Natural killer cell (primary cell): ENCODE measurements at regions of chr3 and their contacts with region 1.

Region 1: DNA sequence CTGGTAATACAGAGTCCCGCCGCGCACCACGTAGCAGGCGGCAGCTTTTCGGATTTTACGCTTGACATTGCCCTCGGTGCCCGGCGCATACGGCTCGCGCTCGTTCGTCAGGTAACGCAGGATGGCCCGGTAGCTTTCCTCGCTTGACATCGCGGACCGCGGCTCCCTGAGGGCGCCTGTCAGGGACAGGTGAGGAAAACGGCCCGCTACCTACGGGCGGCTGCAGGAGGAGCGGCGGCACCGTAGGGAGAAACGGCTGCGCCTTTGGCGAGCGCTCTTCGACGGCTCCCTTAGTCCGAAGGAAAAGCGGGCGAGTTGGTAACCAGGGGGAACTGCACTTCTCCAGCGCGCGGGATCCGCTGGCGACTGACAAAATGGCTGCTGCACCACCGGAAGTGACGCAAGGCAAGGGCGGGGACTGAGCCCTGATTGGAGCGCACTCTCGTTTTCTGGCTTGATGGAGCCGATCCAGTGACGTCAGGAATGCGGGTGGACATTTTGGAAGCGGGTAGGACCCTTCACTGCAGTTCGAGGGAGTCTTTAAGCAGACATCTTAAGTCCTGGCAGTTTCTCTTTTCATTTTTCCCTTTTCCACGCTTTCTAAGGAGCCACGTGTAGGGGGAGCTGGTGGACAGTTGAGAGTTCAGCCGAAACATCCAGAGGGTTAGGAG is at the start of gene ZBTB11:
- DNase-seq: peak; percentile 100
- ATAC-seq: peak; percentile 67 to 81 (median 71)
- H3K4me3 ChIP-seq: peak within 1 kb of the TSS; percentile 92
- H3K4me3 Mint-ChIP-seq: peak within 1 kb of the TSS; percentile 97
- H3K27ac ChIP-seq: peak within 1 kb of the TSS; percentile 98
- H3K27ac Mint-ChIP-seq: peak within 1 kb of the TSS; percentile 96 to 98
- H3K4me1 ChIP-seq: peaks cover 20% of the 10 kb centered on the region
- H3K4me1 Mint-ChIP-seq: peaks cover 45 to 52% of the 10 kb centered on the region in 2 donors
- H3K27me3 ChIP-seq: no peaks in the 10 kb centered on the region
- H3K27me3 Mint-ChIP-seq: no peaks in the 10 kb centered on the region
- CTCF ChIP-seq: no peak
- total RNA-seq, gene ZBTB11: 72.0 to 90.9 (median 83.5) TPM

Region 2: GRCh38 chr3:101050046-101050445 is 626.9 kb before region 1 on chr3:
- intact Hi-C with region 1: no loop called
- DNase-seq: no peak
- ATAC-seq: no peak
- H3K4me3 ChIP-seq: no peak overlapping the region
- H3K4me3 Mint-ChIP-seq: no peak overlapping the region
- H3K27ac ChIP-seq: no peak overlapping the region
- H3K27ac Mint-ChIP-seq: no peak overlapping the region
- H3K4me1 ChIP-seq: no peaks in the 10 kb centered on the region
- H3K4me1 Mint-ChIP-seq: no peaks in the 10 kb centered on the region
- H3K27me3 ChIP-seq: no peaks in the 10 kb centered on the region
- H3K27me3 Mint-ChIP-seq: peaks cover 0 to 2% of the 10 kb centered on the region in 2 donors
- CTCF ChIP-seq: no peak

Region 3: DNA sequence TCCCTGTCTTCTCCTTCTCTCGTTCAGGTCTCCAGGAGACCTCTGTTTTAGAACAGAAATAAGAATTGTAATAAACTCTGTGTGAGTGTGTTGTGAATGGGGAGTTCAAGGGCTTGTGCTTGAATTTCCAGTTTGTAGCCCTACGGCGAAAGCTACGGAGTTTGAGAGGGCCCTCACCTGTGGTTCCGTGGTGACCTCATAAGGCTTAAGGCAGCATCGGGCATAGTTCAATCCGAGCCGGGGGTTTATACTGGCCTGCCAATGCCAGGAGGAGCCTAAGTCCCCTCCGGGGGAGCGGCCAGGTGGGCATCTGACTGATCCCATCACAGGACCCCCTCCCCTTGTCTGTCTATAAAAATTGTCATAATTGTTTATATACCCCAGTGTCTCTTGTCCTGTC is 43.7 kb before region 1 on chr3:
- intact Hi-C with region 1: no loop called
- DNase-seq: no peak
- ATAC-seq: no peak
- H3K4me3 ChIP-seq: no peak overlapping the region
- H3K4me3 Mint-ChIP-seq: no peak overlapping the region
- H3K27ac ChIP-seq: no peak overlapping the region
- H3K27ac Mint-ChIP-seq: no peak overlapping the region
- H3K4me1 ChIP-seq: peaks cover 9% of the 10 kb centered on the region
- H3K4me1 Mint-ChIP-seq: no peaks in the 10 kb centered on the region
- H3K27me3 ChIP-seq: no peaks in the 10 kb centered on the region
- H3K27me3 Mint-ChIP-seq: no peaks in the 10 kb centered on the region
- CTCF ChIP-seq: no peak

Region 4: GRCh38 chr3:101643861-101644613 is 32.9 kb before region 1 on chr3:
- intact Hi-C with region 1: loop called (anchors 1 kb)
- DNase-seq: peak; percentile 35 to 68
- ATAC-seq: peak; percentile 88 to 91 (median 90)
- H3K4me3 ChIP-seq: no peak overlapping the region
- H3K4me3 Mint-ChIP-seq: peak overlapping the region; percentile 65
- H3K27ac ChIP-seq: peak overlapping the region; percentile 79
- H3K27ac Mint-ChIP-seq: peak overlapping the region; percentile 90 to 91
- H3K4me1 ChIP-seq: peaks cover 26% of the 10 kb centered on the region
- H3K4me1 Mint-ChIP-seq: peaks cover 20 to 24% of the 10 kb centered on the region in 2 donors
- H3K27me3 ChIP-seq: no peaks in the 10 kb centered on the region
- H3K27me3 Mint-ChIP-seq: no peaks in the 10 kb centered on the region
- CTCF ChIP-seq: no peak

Region 5: DNA sequence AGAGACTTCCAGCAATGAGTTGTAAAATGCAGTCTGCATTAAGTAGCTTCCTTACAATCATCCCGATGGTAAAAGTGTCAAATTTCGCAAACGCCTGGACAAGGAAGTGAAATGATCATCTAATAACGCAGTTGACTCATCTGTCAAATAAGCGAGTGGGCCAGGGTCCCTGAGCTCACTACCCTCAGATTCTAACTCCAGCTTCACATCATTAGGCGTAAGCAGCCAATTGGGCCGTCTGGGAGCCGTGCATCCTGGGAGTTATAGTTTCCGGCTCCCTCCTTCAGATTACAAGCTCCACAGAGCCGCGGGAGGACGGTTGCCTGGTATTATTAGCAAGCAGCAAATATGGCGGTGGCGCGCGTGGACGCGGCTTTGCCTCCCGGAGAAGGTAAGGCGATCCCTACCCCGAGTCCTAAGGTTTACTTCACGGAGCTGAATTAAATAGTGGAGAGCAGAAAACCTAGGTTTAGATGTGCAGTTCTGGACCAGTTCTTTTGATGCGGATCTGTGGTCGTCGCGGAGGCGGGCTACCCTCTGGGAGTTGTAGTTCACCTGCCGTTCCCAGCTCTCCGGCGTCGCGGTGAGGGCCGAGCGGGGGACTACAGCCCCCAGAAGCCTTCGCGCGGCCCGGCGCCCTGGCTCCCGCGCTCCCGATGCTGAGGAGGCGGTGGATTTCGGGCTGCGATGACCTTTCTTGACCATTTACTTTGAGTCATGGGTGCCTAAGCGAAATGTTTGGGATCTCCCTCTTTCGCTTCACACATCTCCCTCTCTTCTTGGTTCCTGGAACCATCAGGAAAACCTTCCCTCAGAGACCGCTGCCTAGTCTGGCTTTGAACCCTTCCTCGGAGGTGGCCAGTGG is 47.7 kb after region 1 on chr3 and contains the start of gene CEP97:
- intact Hi-C with region 1: loop called (anchors 1 kb)
- DNase-seq: peak; percentile 79 to 91
- ATAC-seq: peak; percentile 96 to 100 (median 97)
- H3K4me3 ChIP-seq: peak within 1 kb of the TSS; percentile 82
- H3K4me3 Mint-ChIP-seq: peak within 1 kb of the TSS; percentile 98
- H3K27ac ChIP-seq: peak within 1 kb of the TSS; percentile 54
- H3K27ac Mint-ChIP-seq: peak within 1 kb of the TSS; percentile 90 to 95
- H3K4me1 ChIP-seq: peaks cover 12% of the 10 kb centered on the region
- H3K4me1 Mint-ChIP-seq: peaks cover 17 to 25% of the 10 kb centered on the region in 2 donors
- H3K27me3 ChIP-seq: no peaks in the 10 kb centered on the region
- H3K27me3 Mint-ChIP-seq: no peaks in the 10 kb centered on the region
- CTCF ChIP-seq: no peak
- total RNA-seq, gene CEP97: 8.5 to 11.0 (median 9.4) TPM

Region 6: DNA sequence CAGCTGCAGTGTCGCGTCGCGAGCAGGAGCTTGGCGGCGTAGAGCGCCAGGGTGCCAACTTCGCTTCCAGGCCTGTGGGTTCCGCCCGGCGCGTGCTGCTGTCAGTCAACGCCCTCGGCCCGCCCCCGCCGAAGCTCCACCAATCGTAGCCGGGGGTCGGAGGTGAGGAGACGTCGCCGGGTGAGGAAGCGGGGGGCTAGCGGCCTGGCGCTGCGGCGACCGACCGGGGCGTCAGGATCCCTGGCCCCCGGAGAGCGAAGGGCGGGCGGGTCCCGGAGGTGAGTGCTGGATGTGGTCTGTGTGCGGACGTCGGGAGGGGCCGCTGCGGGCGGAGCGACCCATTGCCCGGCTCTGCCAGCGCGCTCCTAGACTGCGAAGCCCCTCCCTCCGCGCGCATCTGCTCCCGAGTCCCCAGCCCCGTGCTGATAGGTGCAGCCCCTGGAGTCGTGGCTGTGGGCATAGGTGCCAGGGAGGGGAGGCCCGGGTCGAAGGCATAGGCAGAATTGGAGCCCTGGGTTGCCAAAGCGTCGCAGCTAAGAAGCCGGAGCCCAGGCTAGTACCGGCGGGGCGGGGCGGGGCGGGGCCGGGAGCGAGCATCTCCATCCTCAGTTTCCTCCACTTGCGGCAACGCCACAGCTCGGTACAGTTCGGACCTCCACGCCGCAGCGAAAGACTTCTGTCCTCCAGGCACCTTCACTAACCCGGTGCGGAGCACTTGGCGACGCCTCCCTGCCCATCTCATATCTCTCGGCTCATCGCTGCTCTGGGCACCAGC is 102.3 kb after region 1 on chr3 and contains the start of gene NXPE3:
- intact Hi-C with region 1: loop called (anchors 2 kb)
- DNase-seq: peak; percentile 94 to 95
- ATAC-seq: peak; percentile 93 to 97 (median 94)
- H3K4me3 ChIP-seq: peak within 1 kb of the TSS; percentile 82
- H3K4me3 Mint-ChIP-seq: peak within 1 kb of the TSS; percentile 95
- H3K27ac ChIP-seq: peak within 1 kb of the TSS; percentile 95
- H3K27ac Mint-ChIP-seq: peak within 1 kb of the TSS; percentile 91 to 97
- H3K4me1 ChIP-seq: peaks cover 16% of the 10 kb centered on the region
- H3K4me1 Mint-ChIP-seq: peaks cover 24 to 34% of the 10 kb centered on the region in 2 donors
- H3K27me3 ChIP-seq: no peaks in the 10 kb centered on the region
- H3K27me3 Mint-ChIP-seq: no peaks in the 10 kb centered on the region
- CTCF ChIP-seq: no peak
- total RNA-seq, gene NXPE3: 17.0 to 27.1 (median 21.1) TPM

Region 7: DNA sequence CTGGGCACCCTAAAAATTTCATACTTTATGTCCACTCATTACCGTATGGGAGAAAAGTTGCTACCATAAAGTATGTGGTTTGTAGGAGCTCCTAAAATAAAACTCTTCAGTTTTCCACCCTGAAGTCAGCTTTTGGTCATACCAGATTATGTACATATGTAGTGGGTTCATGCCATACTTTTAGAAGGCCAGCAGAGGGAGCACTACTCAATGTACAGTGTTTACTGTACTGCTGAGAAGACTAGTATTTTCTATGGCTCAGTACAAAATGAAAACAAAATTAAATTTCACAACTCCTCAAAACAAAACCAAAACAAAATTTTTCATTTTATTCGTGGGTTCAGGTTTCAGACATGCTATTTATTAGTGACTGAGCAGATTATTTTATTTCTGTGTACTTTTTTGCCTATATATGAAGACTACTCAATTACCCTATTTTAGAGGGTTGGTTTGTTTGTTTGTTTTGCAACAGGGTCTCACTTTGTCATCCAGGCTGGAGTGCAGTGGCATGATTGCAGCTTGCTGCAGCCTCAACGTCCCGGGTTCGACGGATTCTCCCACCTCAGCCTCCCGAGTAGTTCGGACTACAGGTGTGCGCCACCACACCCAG is 126.4 kb after region 1 on chr3:
- intact Hi-C with region 1: no loop called
- DNase-seq: peak in 1 of 2 donors; percentile 90
- ATAC-seq: peak; percentile 100
- H3K4me3 ChIP-seq: no peak overlapping the region
- H3K4me3 Mint-ChIP-seq: peak overlapping the region; percentile 56
- H3K27ac ChIP-seq: peak overlapping the region; percentile 31
- H3K27ac Mint-ChIP-seq: peak overlapping the region; percentile 52 to 78
- H3K4me1 ChIP-seq: peaks cover 4% of the 10 kb centered on the region
- H3K4me1 Mint-ChIP-seq: peaks cover 7 to 17% of the 10 kb centered on the region in 2 donors
- H3K27me3 ChIP-seq: no peaks in the 10 kb centered on the region
- H3K27me3 Mint-ChIP-seq: no peaks in the 10 kb centered on the region
- CTCF ChIP-seq: peak; percentile 89

Region 8: GRCh38 chr3:101816215-101817149 is 139.6 kb after region 1 on chr3:
- intact Hi-C with region 1: no loop called
- DNase-seq: no peak
- ATAC-seq: no peak
- H3K4me3 ChIP-seq: no peak overlapping the region
- H3K4me3 Mint-ChIP-seq: no peak overlapping the region
- H3K27ac ChIP-seq: no peak overlapping the region
- H3K27ac Mint-ChIP-seq: no peak overlapping the region
- H3K4me1 ChIP-seq: peaks cover 2% of the 10 kb centered on the region
- H3K4me1 Mint-ChIP-seq: peaks cover 5 to 9% of the 10 kb centered on the region in 2 donors
- H3K27me3 ChIP-seq: no peaks in the 10 kb centered on the region
- H3K27me3 Mint-ChIP-seq: no peaks in the 10 kb centered on the region
- CTCF ChIP-seq: no peak

Region 9: GRCh38 chr3:101827211-101828174 is 150.6 kb after region 1 on chr3:
- intact Hi-C with region 1: loop called (anchors 2 kb)
- DNase-seq: peak; percentile 75 to 90
- ATAC-seq: peak; percentile 80 to 92 (median 86)
- H3K4me3 ChIP-seq: peak overlapping the region; percentile 56
- H3K4me3 Mint-ChIP-seq: peak overlapping the region; percentile 92
- H3K27ac ChIP-seq: peak overlapping the region; percentile 89
- H3K27ac Mint-ChIP-seq: peak overlapping the region; percentile 89 to 96
- H3K4me1 ChIP-seq: peaks cover 26% of the 10 kb centered on the region
- H3K4me1 Mint-ChIP-seq: peaks cover 35 to 38% of the 10 kb centered on the region in 2 donors
- H3K27me3 ChIP-seq: no peaks in the 10 kb centered on the region
- H3K27me3 Mint-ChIP-seq: no peaks in the 10 kb centered on the region
- CTCF ChIP-seq: no peak